Mammary epithelial cell (primary cell): ENCODE measurements at regions of chr3 and their contacts with region 1.

Region 1: DNA sequence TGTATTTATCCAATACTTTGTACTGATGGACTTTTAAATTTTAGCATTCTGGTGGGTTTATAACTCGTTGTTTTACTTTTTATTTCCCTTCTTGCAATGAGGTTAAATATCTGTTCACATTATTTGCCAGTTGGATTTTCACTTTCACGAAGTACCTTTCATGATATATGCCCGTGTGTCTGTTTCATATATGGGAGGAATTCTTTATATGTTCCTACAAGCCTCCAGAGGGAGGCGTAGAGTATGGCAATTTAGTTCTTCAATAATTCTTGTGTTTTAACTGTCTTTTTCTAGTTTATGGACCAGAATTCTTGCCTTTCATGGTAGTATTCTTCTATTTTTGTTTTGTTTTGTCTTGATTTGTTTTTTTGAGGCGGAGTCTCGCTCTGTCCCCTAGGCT is 44.8 kb downstream of the PFN2 start:
- DNase-seq: no peak
- H3K4me3 ChIP-seq: no peak overlapping the region
- H3K27ac ChIP-seq: no peak overlapping the region
- H3K4me1 ChIP-seq: no peaks in the 10 kb centered on the region
- H3K27me3 ChIP-seq: no peaks in the 10 kb centered on the region
- CTCF ChIP-seq: no peak

Region 2: DNA sequence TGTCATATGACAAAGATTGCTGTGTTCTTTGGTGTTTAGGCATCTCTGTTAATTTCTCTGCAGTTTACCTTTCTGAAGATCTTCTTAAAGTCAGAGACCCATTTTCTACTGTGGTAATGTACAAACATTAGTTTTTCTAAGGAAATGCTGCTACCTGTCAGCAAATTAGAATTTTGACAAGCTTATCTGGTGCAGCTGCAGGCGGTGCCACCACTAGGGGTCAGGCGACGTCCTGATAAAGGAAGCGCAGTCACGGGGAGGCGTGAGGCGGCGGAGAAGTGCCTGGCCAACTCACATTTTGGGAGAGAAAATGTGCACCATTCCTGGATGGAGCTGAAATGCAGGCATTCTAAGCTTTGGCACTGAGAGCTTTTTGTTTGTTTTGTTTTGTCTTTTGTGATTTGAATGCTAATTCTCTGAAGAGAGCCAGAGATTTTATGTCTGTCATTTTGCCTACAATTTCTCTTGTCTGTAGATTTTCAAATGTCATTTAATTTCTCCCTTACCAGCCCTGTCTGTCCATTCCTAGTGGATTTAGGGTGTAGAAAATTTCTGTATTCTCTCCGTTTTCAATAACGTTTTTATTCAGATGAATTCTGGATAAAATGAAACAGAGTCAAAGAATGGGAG is 862.0 kb after region 1 on chr3:
- CTCF ChIA-PET with region 1: interaction called, 15 read pairs
- dilution Hi-C with region 1: no loop called
- in situ Hi-C with region 1: no loop called
- intact Hi-C with region 1: no loop called
- DNase-seq: peak; percentile 50
- H3K4me3 ChIP-seq: no peak overlapping the region
- H3K27ac ChIP-seq: no peak overlapping the region
- H3K4me1 ChIP-seq: peaks cover 6% of the 10 kb centered on the region
- H3K27me3 ChIP-seq: no peaks in the 10 kb centered on the region
- CTCF ChIP-seq: peak; percentile 90 to 99